ENCODE measurements at regions of chr19 and their contacts with region 1.

Region 1: GRCh38 chr19:39599116-39599515 is 3.2 kb upstream of the LGALS13 start:
- DNase-seq: no peak
- H3K4me3 Mint-ChIP-seq: no peak overlapping the region
- H3K27ac Mint-ChIP-seq: no peak overlapping the region
- H3K4me1 Mint-ChIP-seq: no peaks in the 10 kb centered on the region
- H3K27me3 Mint-ChIP-seq: peaks cover 5% of the 10 kb centered on the region

Region 2: GRCh38 chr19:39645800-39646411 is 46.8 kb after region 1 on chr19:
- intact Hi-C with region 1: loop called (anchors 5 kb)
- DNase-seq: no peak
- H3K4me3 Mint-ChIP-seq: no peak overlapping the region
- H3K27ac Mint-ChIP-seq: no peak overlapping the region
- H3K4me1 Mint-ChIP-seq: no peaks in the 10 kb centered on the region
- H3K27me3 Mint-ChIP-seq: peaks cover 4% of the 10 kb centered on the region

Measured in activated T-helper 1 cell treated with anti-CD3 and anti-CD28 coated beads, Interleukin-12 subunit alpha, Interleukin-12 subunit beta, Interleukin-2, Interleukin-4 antibody, amounts not matched to agents 30 ng/mL and 10 ng/mL and 1 ng/mL, durations not matched to agents 14 hours and 24 hours and 36 hours (primary cell).